Gastrocnemius medialis (tissue), 4 donors: ENCODE measurements at regions of chr15 and their contacts with region 1.

Region 1: GRCh38 chr15:93523481-93523880 is 434.5 kb upstream of the RGMA start:
- DNase-seq: no peak
- ATAC-seq: no peak
- H3K4me3 ChIP-seq: no peak overlapping the region
- H3K27ac ChIP-seq: no peak overlapping the region
- H3K4me1 ChIP-seq: peaks cover 12 to 22% of the 10 kb centered on the region in 2 donors
- H3K27me3 ChIP-seq: no peaks in the 10 kb centered on the region
- CTCF ChIP-seq: no peak
- POLR2A ChIP-seq: no peak

Region 2: DNA sequence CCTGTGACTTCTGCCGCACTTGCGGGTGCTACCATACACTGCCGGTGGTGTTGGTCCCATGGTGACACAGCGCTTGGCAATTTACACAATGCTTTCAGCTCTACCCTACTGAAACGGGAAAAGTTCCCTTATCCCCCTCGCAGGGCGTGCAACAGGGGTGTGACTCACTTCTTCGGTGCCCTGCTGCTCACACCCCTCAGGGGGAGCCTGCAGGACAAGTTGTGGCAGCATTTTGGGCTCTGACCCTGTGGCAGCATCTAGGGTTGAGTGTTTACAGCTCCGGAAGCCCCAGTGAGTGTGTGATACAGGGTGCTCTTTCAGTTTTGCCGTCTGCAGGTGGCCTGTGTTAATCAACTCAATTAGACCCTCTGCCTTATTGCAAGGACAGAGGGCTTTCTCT is 109.7 kb before region 1 on chr15:
- in situ Hi-C with region 1: no loop called
- intact Hi-C with region 1: no loop called
- DNase-seq: no peak
- ATAC-seq: no peak
- H3K4me3 ChIP-seq: no peak overlapping the region
- H3K27ac ChIP-seq: no peak overlapping the region
- H3K4me1 ChIP-seq: no peaks in the 10 kb centered on the region
- H3K27me3 ChIP-seq: no peaks in the 10 kb centered on the region
- CTCF ChIP-seq: no peak
- POLR2A ChIP-seq: no peak

Region 3: DNA sequence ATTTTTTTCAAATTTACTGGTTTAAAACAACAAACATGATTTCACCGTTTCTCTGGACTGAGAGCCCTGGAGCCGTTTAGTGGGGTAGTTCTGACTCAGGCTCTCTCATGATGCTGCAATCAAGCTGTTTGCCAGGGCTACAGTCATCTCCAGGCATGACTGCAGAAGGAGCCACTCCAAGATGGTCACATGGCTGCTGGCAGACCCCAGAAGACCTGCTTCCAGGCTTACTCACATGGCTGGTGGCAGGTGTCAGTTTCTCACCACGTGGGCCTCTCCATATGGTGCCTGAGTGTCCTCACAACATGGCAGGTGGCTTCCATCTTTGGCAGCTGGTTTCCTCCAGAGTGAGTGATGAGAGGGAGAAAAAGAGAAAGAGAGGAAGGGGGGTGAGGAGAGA is 56.2 kb before region 1 on chr15:
- in situ Hi-C with region 1: no loop called
- intact Hi-C with region 1: loop called (anchors 5 kb)
- DNase-seq: peak; percentile 96 to 98
- ATAC-seq: peak; percentile 99 to 100
- H3K4me3 ChIP-seq: no peak overlapping the region
- H3K27ac ChIP-seq: peak overlapping the region; percentile 47 to 72 (median 70)
- H3K4me1 ChIP-seq: peaks cover 11 to 22% of the 10 kb centered on the region in 2 donors
- H3K27me3 ChIP-seq: no peaks in the 10 kb centered on the region
- CTCF ChIP-seq: peak in 1 of 5 experiments; percentile 17
- POLR2A ChIP-seq: no peak

Region 4: DNA sequence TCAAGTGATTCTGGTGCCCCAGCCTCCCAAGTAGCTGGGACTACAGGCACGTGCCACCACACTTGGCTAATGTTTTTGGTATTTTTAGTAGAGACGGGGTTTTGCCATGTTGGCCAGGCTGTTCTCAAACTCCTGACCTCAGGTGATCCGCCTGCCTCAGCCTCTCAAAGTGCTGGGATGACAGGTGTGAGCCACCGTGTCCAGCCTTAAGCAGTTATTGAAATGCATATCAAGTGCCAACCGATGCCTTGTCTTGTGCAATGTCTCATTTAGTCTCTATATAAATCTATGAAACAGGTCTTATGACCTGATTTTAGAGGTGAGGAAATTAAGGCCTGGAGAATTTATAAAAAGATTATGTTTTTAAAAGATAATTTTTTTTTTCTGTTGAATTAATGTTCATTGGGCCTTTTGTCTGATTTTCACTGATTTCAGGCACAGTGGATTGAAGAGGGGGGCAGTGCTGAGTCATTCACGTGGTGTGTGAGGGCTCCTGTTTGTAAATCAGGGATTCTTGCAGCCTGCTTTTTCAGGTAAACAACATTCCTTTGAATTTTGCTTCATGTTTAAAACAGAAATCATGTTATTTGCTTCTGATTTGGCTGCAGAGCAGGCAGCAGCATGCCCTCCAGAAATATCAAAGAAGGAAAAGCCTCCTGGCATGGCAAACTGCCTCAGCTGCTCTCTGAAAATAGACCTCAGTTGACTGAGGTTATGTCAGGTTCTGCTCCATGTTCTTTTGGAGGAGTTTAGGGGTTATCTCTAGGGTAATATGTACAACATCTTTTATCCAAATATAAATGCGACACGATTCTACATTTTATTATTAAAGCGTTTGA is 27.5 kb before region 1 on chr15:
- in situ Hi-C with region 1: no loop called
- intact Hi-C with region 1: loop called (anchors 2 kb)
- DNase-seq: peak; percentile 39 to 74
- ATAC-seq: peak; percentile 96 to 97
- H3K4me3 ChIP-seq: no peak overlapping the region
- H3K27ac ChIP-seq: peak overlapping the region; percentile 62 to 86 (median 80)
- H3K4me1 ChIP-seq: peaks cover 5 to 7% of the 10 kb centered on the region in 2 donors
- H3K27me3 ChIP-seq: no peaks in the 10 kb centered on the region
- CTCF ChIP-seq: no peak
- POLR2A ChIP-seq: no peak